Activated CD4-positive, alpha-beta memory T cell treated with anti-CD3 and anti-CD28 coated beads, Interleukin-2, amount 10 ng/mL, durations not matched to agents 7 days and 5 days (primary cell): ENCODE measurements at regions of chr18 and their contacts with region 1.

Region 1: GRCh38 chr18:63439334-63439733 is 17.1 kb upstream of the VPS4B start:
- DNase-seq: peak; percentile 48
- H3K4me3 Mint-ChIP-seq: no peak overlapping the region
- H3K27ac Mint-ChIP-seq: no peak overlapping the region
- H3K4me1 Mint-ChIP-seq: peaks cover 2% of the 10 kb centered on the region
- H3K27me3 Mint-ChIP-seq: peaks cover 26% of the 10 kb centered on the region

Region 2: DNA sequence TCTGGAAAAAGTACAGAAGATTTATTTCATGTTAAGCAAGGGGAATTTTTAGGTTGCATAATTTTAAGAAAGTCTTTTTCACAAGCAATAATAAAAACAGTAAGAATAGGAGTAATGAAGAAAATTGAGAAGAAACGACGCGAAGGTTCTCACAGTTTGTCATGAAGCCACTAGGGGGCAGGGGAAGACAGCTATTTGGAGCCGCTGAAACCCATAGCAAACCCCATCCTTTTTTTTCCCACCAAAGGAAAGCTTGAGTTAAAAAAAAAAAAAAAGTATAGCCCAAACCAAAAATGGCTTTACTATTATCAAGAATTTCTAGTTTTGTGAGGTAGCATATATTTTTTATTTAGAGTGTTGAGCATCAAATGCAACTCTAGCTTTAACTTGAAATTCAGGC is 423.1 kb before region 1 on chr18:
- CTCF ChIA-PET with region 1: interaction called, 45 read pairs
- POLR2A ChIA-PET with region 1: no interaction called
- DNase-seq: peak; percentile 53
- H3K4me3 Mint-ChIP-seq: no peak overlapping the region
- H3K27ac Mint-ChIP-seq: no peak overlapping the region
- H3K4me1 Mint-ChIP-seq: no peaks in the 10 kb centered on the region
- H3K27me3 Mint-ChIP-seq: peaks cover 50% of the 10 kb centered on the region

Region 3: GRCh38 chr18:63131106-63131958 is 308.0 kb before region 1 on chr18:
- CTCF ChIA-PET with region 1: interaction called, 11 read pairs
- POLR2A ChIA-PET with region 1: no interaction called
- DNase-seq: peak; percentile 59
- H3K4me3 Mint-ChIP-seq: no peak overlapping the region
- H3K27ac Mint-ChIP-seq: no peak overlapping the region
- H3K4me1 Mint-ChIP-seq: peaks cover 37% of the 10 kb centered on the region
- H3K27me3 Mint-ChIP-seq: no peaks in the 10 kb centered on the region

Region 4: DNA sequence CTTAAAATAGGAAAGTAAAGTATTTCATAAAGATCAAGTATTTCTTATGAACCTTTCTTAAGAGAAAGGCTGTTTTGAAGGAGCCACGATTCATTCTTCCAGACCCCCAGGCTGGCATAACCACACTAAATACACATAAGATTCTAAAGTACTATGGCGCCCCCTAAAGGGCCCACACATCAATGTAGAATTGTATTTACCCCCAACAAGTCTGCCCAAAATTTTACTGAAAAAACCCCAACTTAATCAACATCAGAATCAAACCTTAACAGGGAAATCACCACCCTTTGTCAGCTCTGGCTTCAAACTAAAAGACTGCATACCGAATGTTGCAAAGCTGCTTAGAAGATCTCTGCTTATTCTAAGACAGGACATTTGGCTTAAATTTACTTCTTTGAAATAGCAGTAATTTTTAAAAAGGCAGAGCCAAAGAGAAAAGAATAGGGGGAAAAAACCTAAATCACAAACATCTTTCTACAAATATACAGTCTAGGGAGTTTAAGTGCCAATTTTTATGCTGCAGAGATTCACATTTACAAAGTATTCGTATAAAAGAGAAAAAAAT is 99.3 kb before region 1 on chr18:
- CTCF ChIA-PET with region 1: interaction called, 57 read pairs
- POLR2A ChIA-PET with region 1: interaction called, 3 read pairs
- DNase-seq: peak; percentile 34
- H3K4me3 Mint-ChIP-seq: no peak overlapping the region
- H3K27ac Mint-ChIP-seq: no peak overlapping the region
- H3K4me1 Mint-ChIP-seq: peaks cover 7% of the 10 kb centered on the region
- H3K27me3 Mint-ChIP-seq: no peaks in the 10 kb centered on the region

Region 5: GRCh38 chr18:63367053-63367953 is 72.0 kb before region 1 on chr18 and contains the start of gene KDSR:
- CTCF ChIA-PET with region 1: interaction called, 15 read pairs
- POLR2A ChIA-PET with region 1: interaction called, 7 read pairs
- DNase-seq: peak; percentile 87
- H3K4me3 Mint-ChIP-seq: peak within 1 kb of the TSS; percentile 92
- H3K27ac Mint-ChIP-seq: peak within 1 kb of the TSS; percentile 77
- H3K4me1 Mint-ChIP-seq: peaks cover 48% of the 10 kb centered on the region
- H3K27me3 Mint-ChIP-seq: no peaks in the 10 kb centered on the region
- total RNA-seq, gene KDSR: 60.9 to 66.4 TPM

Region 6: DNA sequence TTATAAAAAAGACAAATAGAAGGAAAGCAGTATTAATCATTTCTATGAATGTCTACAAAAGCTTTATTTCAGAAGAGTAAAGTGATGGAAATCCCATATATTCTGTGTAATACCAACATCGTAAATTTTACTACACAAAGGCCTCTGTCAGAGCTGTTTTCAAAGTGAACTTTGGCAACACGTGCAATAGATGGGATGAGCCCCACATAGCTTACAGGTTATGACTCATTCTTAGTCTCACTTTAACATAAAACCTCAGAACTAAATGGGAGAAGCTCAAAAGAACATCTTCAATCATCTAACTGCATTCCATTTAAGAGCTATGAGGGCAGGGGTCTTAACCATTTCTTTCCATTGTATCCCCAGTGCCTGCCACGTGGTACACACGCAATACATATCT is 28.5 kb before region 1 on chr18:
- CTCF ChIA-PET with region 1: interaction called, 18 read pairs
- POLR2A ChIA-PET with region 1: interaction called, 3 read pairs
- DNase-seq: no peak
- H3K4me3 Mint-ChIP-seq: peak overlapping the region; percentile 9
- H3K27ac Mint-ChIP-seq: peak overlapping the region; percentile 73
- H3K4me1 Mint-ChIP-seq: peaks cover 70% of the 10 kb centered on the region
- H3K27me3 Mint-ChIP-seq: no peaks in the 10 kb centered on the region

Region 7: GRCh38 chr18:63422087-63422809 is 17.1 kb before region 1 on chr18 and contains the start of gene VPS4B:
- CTCF ChIA-PET with region 1: interaction called, 17 read pairs
- POLR2A ChIA-PET with region 1: interaction called, 4 read pairs
- DNase-seq: peak; percentile 100
- H3K4me3 Mint-ChIP-seq: peak within 1 kb of the TSS; percentile 89
- H3K27ac Mint-ChIP-seq: peak within 1 kb of the TSS; percentile 91
- H3K4me1 Mint-ChIP-seq: peaks cover 36% of the 10 kb centered on the region
- H3K27me3 Mint-ChIP-seq: no peaks in the 10 kb centered on the region
- total RNA-seq, gene VPS4B: 72.4 to 77.0 TPM